ENCODE measurements at regions of chr2 and their contacts with region 1.

Region 1: GRCh38 chr2:37890893-37891495 is 34.1 kb upstream of the RMDN2 start:
- DNase-seq: peak; percentile 81
- H3K4me3 Mint-ChIP-seq: no peak overlapping the region
- H3K27ac Mint-ChIP-seq: no peak overlapping the region
- H3K4me1 Mint-ChIP-seq: peaks cover 34% of the 10 kb centered on the region
- H3K27me3 Mint-ChIP-seq: peaks cover 2% of the 10 kb centered on the region

Region 2: GRCh38 chr2:37414470-37414949 is 476.5 kb before region 1 on chr2:
- CTCF ChIA-PET with region 1: interaction called, 4 read pairs
- intact Hi-C with region 1: loop called (anchors 1 kb)
- DNase-seq: no peak
- H3K4me3 Mint-ChIP-seq: no peak overlapping the region
- H3K27ac Mint-ChIP-seq: no peak overlapping the region
- H3K4me1 Mint-ChIP-seq: peaks cover 3% of the 10 kb centered on the region
- H3K27me3 Mint-ChIP-seq: no peaks in the 10 kb centered on the region

Region 3: GRCh38 chr2:37925063-37925897 is 34.3 kb after region 1 on chr2 and contains the start of gene RMDN2:
- CTCF ChIA-PET with region 1: interaction called, 10 read pairs
- intact Hi-C with region 1: loop called (anchors 1 kb)
- DNase-seq: peak; percentile 83
- H3K4me3 Mint-ChIP-seq: peak within 1 kb of the TSS; percentile 81
- H3K27ac Mint-ChIP-seq: peak within 1 kb of the TSS; percentile 68
- H3K4me1 Mint-ChIP-seq: peaks cover 8% of the 10 kb centered on the region
- H3K27me3 Mint-ChIP-seq: no peaks in the 10 kb centered on the region
- total RNA-seq, gene RMDN2: 0.79 to 1.2 TPM

Region 4: GRCh38 chr2:37982147-37982582 is 91.2 kb after region 1 on chr2:
- CTCF ChIA-PET with region 1: no interaction called
- intact Hi-C with region 1: loop called (anchors 5 kb)
- DNase-seq: peak; percentile 73
- H3K4me3 Mint-ChIP-seq: no peak overlapping the region
- H3K27ac Mint-ChIP-seq: no peak overlapping the region
- H3K4me1 Mint-ChIP-seq: peaks cover 6% of the 10 kb centered on the region
- H3K27me3 Mint-ChIP-seq: no peaks in the 10 kb centered on the region

Region 5: GRCh38 chr2:38274286-38275276 is 383.6 kb after region 1 on chr2:
- CTCF ChIA-PET with region 1: no interaction called
- intact Hi-C with region 1: loop called (anchors 2 kb)
- DNase-seq: peak; percentile 53
- H3K4me3 Mint-ChIP-seq: no peak overlapping the region
- H3K27ac Mint-ChIP-seq: no peak overlapping the region
- H3K4me1 Mint-ChIP-seq: peaks cover 2% of the 10 kb centered on the region
- H3K27me3 Mint-ChIP-seq: no peaks in the 10 kb centered on the region